Endothelial cell of umbilical vein (primary cell): ENCODE measurements at regions of chr6 and their contacts with region 1.

Region 1: GRCh38 chr6:152948150-152948768 is 34.6 kb downstream of the FBXO5 start:
- DNase-seq: peak; percentile 64
- H3K4me3 ChIP-seq: no peak overlapping the region
- H3K27ac ChIP-seq: no peak overlapping the region
- H3K4me1 ChIP-seq: peaks cover 11% of the 10 kb centered on the region
- H3K27me3 ChIP-seq: no peaks in the 10 kb centered on the region
- CTCF ChIP-seq: peak; percentile 41 to 46
- POLR2A ChIP-seq: no peak

Region 2: DNA sequence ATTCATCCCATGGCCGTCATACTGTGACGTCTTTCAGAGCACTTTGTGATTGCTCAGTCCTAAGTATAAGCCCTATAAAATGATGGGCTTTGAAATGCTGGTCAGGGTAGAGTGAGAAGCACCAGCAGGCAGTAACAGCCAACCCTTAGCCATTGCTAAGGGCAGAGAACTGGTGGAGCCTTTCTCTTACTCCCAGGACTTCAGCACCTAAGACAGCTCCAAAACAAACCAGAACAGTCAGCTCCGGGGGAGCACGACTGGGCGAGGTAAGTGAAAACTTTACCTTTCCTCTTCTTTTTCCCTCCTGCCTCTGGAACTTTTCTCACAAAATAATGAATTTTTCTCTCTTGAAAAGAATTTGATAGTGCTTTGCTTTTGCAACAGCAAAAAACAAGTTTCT is 197.6 kb before region 1 on chr6 and contains the start of gene VIP:
- CTCF ChIA-PET with region 1: interaction called, 103 read pairs
- POLR2A ChIA-PET with region 1: no interaction called
- dilution Hi-C with region 1: no loop called
- intact Hi-C with region 1: loop called (anchors 1 kb)
- DNase-seq: peak; percentile 46
- H3K4me3 ChIP-seq: no peak within 1 kb of the TSS
- H3K27ac ChIP-seq: no peak within 1 kb of the TSS
- H3K4me1 ChIP-seq: no peaks in the 10 kb centered on the region
- H3K27me3 ChIP-seq: peaks cover 0 to 2% of the 10 kb centered on the region in 2 experiments
- CTCF ChIP-seq: no peak
- POLR2A ChIP-seq: no peak
- total RNA-seq, gene VIP: 1.2 and 2.0 TPM in 2 replicates

Region 3: DNA sequence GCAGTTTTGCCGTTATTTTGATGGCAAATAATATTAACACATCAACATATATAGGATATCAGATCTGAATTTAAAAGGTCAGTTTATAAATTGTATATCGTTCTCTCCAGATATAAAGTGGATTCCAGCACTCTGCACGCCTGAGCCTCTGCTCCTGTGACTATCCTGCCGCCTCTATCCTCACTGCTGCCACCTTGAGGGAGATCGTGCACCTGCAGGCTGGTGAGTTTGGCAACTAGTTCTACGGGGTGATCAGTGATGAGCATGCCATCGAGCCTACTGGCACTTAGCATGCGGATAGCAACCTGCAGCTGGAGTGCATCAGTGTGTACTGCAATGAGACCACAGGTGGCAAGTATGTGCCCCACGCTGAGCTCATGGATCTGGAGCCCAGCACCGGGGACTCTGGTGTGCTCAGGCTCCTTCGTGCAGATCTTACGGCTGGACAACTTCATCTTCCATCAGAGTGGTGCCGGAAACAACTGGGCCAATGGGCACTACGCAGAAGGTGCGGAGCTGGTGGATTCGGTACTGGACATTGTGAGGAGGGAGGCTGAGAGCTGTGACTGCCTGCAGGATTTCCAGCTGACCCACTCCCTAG is 50.4 kb before region 1 on chr6:
- CTCF ChIA-PET with region 1: interaction called, 16 read pairs
- POLR2A ChIA-PET with region 1: no interaction called
- dilution Hi-C with region 1: no loop called
- intact Hi-C with region 1: no loop called
- DNase-seq: peak; percentile 65
- H3K4me3 ChIP-seq: no peak overlapping the region
- H3K27ac ChIP-seq: no peak overlapping the region
- H3K4me1 ChIP-seq: no peaks in the 10 kb centered on the region
- H3K27me3 ChIP-seq: peaks cover 0 to 2% of the 10 kb centered on the region in 2 experiments
- CTCF ChIP-seq: peak; percentile 84 to 88
- POLR2A ChIP-seq: no peak

Region 4: DNA sequence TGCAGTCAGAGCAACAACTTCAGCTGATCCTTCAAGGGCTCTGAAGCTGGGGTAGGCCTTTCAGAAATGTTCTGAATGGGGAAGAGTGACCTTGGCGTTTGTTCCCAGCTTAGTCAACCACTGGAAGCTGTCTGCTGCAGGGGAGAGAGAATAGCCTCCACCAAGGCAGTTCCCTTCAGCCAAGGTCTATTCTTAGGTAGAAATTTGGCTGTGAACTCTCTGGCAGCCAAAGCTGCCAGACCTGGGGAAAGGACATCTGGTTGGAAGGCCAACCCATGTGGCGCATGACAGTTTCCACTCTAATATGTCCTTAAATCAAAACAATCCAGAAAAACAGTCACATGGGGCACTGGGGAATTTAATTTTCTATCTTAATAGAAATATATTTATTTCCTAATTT is 25.6 kb before region 1 on chr6:
- CTCF ChIA-PET with region 1: interaction called, 10 read pairs
- POLR2A ChIA-PET with region 1: no interaction called
- dilution Hi-C with region 1: no loop called
- intact Hi-C with region 1: no loop called
- DNase-seq: no peak
- H3K4me3 ChIP-seq: no peak overlapping the region
- H3K27ac ChIP-seq: no peak overlapping the region
- H3K4me1 ChIP-seq: peaks cover 9% of the 10 kb centered on the region
- H3K27me3 ChIP-seq: no peaks in the 10 kb centered on the region
- CTCF ChIP-seq: no peak
- POLR2A ChIP-seq: no peak

Region 5: DNA sequence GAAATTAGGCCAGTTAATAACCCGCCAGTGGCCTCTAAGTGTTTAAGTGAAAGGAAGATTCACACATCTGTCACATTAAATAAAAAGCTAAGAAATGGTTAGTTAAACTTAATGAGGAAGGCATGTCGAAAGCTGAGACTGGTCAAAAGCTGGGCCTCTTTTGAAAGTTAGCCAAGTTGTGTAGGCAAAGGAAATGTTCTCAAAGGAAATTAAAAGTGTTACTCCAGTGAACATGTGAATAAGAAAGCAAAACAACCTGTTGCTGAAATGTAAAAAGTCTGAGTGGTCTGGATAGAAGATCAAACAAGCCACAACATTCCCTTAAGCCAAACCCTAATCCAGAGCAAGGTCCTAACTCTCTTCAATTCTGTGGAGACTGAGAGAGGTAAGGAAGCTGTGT is 65.2 kb after region 1 on chr6:
- CTCF ChIA-PET with region 1: no interaction called
- POLR2A ChIA-PET with region 1: no interaction called
- dilution Hi-C with region 1: no loop called
- intact Hi-C with region 1: no loop called
- DNase-seq: peak; percentile 62
- H3K4me3 ChIP-seq: no peak overlapping the region
- H3K27ac ChIP-seq: no peak overlapping the region
- H3K4me1 ChIP-seq: no peaks in the 10 kb centered on the region
- H3K27me3 ChIP-seq: no peaks in the 10 kb centered on the region
- CTCF ChIP-seq: no peak
- POLR2A ChIP-seq: no peak

Region 6: DNA sequence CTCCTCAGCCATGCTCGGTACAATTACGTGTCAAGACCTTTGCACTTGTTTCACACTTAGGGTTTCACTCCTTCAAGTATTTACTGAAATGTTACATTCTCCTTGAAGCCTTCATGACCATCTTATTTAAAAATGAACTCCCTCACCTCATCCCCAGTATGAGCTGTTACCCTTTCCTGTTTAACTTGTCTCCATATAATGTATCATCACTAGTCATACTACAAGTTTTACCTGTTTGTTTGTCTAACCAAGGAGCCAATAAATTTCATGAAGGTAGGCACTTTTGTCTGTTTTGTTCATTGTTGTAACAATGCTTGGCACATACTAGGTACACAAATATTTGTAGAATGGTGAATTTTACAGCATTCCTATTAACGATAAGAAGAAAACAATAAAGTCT is 100.4 kb after region 1 on chr6:
- CTCF ChIA-PET with region 1: no interaction called
- POLR2A ChIA-PET with region 1: no interaction called
- dilution Hi-C with region 1: no loop called
- intact Hi-C with region 1: no loop called
- DNase-seq: no peak
- H3K4me3 ChIP-seq: no peak overlapping the region
- H3K27ac ChIP-seq: no peak overlapping the region
- H3K4me1 ChIP-seq: peaks cover 8% of the 10 kb centered on the region
- H3K27me3 ChIP-seq: no peaks in the 10 kb centered on the region
- CTCF ChIP-seq: no peak
- POLR2A ChIP-seq: no peak

Region 7: DNA sequence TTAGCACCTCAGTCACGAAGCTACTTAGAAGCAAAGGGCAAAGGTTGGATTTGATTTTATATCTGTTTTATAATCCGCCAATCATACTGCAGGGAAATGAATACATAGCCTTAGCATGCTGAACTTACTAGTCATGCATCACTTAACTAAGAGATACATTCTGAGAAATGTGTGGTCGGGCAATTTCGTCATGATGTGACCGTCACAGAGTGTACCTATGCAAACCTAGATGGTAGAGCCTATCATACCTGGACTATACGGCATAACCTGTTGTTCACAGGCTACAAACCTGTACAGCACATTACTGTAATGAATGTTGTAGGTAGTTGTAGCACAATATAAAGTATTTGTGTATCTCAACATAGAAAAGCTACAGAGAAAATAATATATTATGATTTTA is 528.0 kb after region 1 on chr6:
- CTCF ChIA-PET with region 1: no interaction called
- POLR2A ChIA-PET with region 1: no interaction called
- dilution Hi-C with region 1: no loop called
- intact Hi-C with region 1: no loop called
- DNase-seq: no peak
- H3K4me3 ChIP-seq: no peak overlapping the region
- H3K27ac ChIP-seq: no peak overlapping the region
- H3K4me1 ChIP-seq: no peaks in the 10 kb centered on the region
- H3K27me3 ChIP-seq: no peaks in the 10 kb centered on the region
- CTCF ChIP-seq: no peak
- POLR2A ChIP-seq: no peak

Region 8: GRCh38 chr6:153553627-153554026 is 605.4 kb after region 1 on chr6:
- CTCF ChIA-PET with region 1: no interaction called
- POLR2A ChIA-PET with region 1: no interaction called
- dilution Hi-C with region 1: no loop called
- intact Hi-C with region 1: no loop called
- DNase-seq: no peak
- H3K4me3 ChIP-seq: no peak overlapping the region
- H3K27ac ChIP-seq: no peak overlapping the region
- H3K4me1 ChIP-seq: no peaks in the 10 kb centered on the region
- H3K27me3 ChIP-seq: no peaks in the 10 kb centered on the region
- CTCF ChIP-seq: no peak
- POLR2A ChIP-seq: no peak